Activated T-helper 1 cell treated with anti-CD3 and anti-CD28 coated beads, Interleukin-12 subunit alpha, Interleukin-12 subunit beta, Interleukin-2, Interleukin-4 antibody, amounts not matched to agents 30 ng/mL and 10 ng/mL and 1 ng/mL, durations not matched to agents 14 hours and 24 hours and 36 hours (primary cell): ENCODE measurements at regions of chr19 and their contacts with region 1.

Region 1: GRCh38 chr19:52189735-52190486 is at the start of gene PPP2R1A:
- DNase-seq: peak; percentile 97
- H3K4me3 Mint-ChIP-seq: peak within 1 kb of the TSS; percentile 98
- H3K27ac Mint-ChIP-seq: peak within 1 kb of the TSS; percentile 99
- H3K4me1 Mint-ChIP-seq: peaks cover 45% of the 10 kb centered on the region
- H3K27me3 Mint-ChIP-seq: no peaks in the 10 kb centered on the region
- total RNA-seq, gene PPP2R1A: 214 and 215 TPM in 2 replicates

Region 2: GRCh38 chr19:51703575-51704515 is 486.1 kb before region 1 on chr19:
- intact Hi-C with region 1: loop called (anchors 1 kb)
- DNase-seq: peak; percentile 95
- H3K4me3 Mint-ChIP-seq: peak overlapping the region; percentile 87
- H3K27ac Mint-ChIP-seq: peak overlapping the region; percentile 89
- H3K4me1 Mint-ChIP-seq: peaks cover 30% of the 10 kb centered on the region
- H3K27me3 Mint-ChIP-seq: peaks cover 3% of the 10 kb centered on the region

Region 3: DNA sequence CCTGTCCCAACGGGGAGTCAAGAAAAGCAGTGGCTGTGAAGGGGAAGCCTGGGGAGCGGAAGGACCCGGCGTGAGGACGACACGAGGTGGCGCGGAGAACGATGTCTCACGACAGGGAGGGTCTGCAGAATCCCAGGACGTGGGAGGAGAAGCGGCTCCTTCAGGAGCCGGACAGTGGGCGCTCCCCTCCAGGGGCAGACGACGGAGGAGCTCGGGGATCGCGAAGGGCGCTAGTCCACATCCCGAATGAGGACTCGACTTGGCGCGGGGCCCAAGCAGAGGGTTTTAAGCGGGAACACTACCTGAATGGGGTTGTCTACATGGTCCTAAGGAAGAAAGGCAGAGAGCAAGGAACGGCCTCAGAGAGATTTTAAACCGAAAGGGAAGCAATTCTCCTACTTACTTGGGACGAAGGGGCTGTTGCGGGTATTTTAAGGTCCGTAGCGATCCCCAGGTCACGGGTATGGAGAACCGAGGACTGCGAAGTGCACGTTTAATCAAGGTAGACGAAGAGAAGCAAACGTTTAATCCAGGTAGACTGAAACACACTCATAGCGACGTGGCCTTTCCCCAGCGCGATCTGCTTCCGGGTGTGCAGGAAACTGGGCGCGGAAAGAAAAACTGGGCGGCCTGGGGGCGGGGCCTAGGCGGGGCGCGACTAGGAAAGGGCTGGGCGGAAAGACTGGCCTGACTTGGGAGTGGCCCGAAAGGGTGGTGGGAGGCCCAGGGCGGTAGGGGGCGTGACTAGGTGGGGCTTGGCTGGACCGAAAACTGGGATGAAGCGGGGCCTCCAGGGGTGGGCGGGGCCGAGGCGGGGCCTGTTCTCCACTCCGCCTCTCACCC is 94.5 kb before region 1 on chr19 and contains the start of gene ZNF841:
- intact Hi-C with region 1: loop called (anchors 1 kb)
- DNase-seq: peak; percentile 81
- H3K4me3 Mint-ChIP-seq: peak within 1 kb of the TSS; percentile 92
- H3K27ac Mint-ChIP-seq: peak within 1 kb of the TSS; percentile 90
- H3K4me1 Mint-ChIP-seq: peaks cover 22% of the 10 kb centered on the region
- H3K27me3 Mint-ChIP-seq: no peaks in the 10 kb centered on the region
- total RNA-seq, gene ZNF841: 13.7 and 16.1 TPM in 2 replicates

Region 4: GRCh38 chr19:52120286-52120685 is 69.6 kb before region 1 on chr19:
- intact Hi-C with region 1: no loop called
- DNase-seq: no peak
- H3K4me3 Mint-ChIP-seq: no peak overlapping the region
- H3K27ac Mint-ChIP-seq: no peak overlapping the region
- H3K4me1 Mint-ChIP-seq: no peaks in the 10 kb centered on the region
- H3K27me3 Mint-ChIP-seq: no peaks in the 10 kb centered on the region

Region 5: GRCh38 chr19:52171321-52172169 is 18.4 kb before region 1 on chr19 and contains the start of gene ZNF836:
- intact Hi-C with region 1: loop called (anchors 1 kb)
- DNase-seq: peak; percentile 83
- H3K4me3 Mint-ChIP-seq: peak within 1 kb of the TSS; percentile 97
- H3K27ac Mint-ChIP-seq: peak within 1 kb of the TSS; percentile 90
- H3K4me1 Mint-ChIP-seq: peaks cover 11% of the 10 kb centered on the region
- H3K27me3 Mint-ChIP-seq: no peaks in the 10 kb centered on the region
- total RNA-seq, gene ZNF836: 7.8 and 10.8 TPM in 2 replicates

Region 6: GRCh38 chr19:52336117-52336790 is 146.3 kb after region 1 on chr19 and contains the start of gene ZNF610:
- intact Hi-C with region 1: loop called (anchors 1 kb)
- DNase-seq: peak; percentile 77
- H3K4me3 Mint-ChIP-seq: peak within 1 kb of the TSS; percentile 88
- H3K27ac Mint-ChIP-seq: peak within 1 kb of the TSS; percentile 91
- H3K4me1 Mint-ChIP-seq: peaks cover 5% of the 10 kb centered on the region
- H3K27me3 Mint-ChIP-seq: no peaks in the 10 kb centered on the region
- total RNA-seq, gene ZNF610: 0.29 and 0.36 TPM in 2 replicates